Activated naive CD4-positive, alpha-beta T cell treated with anti-CD3 and anti-CD28 coated beads, Interleukin-2, amount 10 ng/mL, durations not matched to agents 7 days and 5 days (primary cell): ENCODE measurements at regions of chr22 and their contacts with region 1.

Region 1: GRCh38 chr22:39395936-39396796 is 3.4 kb upstream of the TAB1 start:
- DNase-seq: no peak
- H3K4me3 Mint-ChIP-seq: no peak overlapping the region
- H3K27ac Mint-ChIP-seq: no peak overlapping the region
- H3K4me1 Mint-ChIP-seq: peaks cover 16% of the 10 kb centered on the region
- H3K27me3 Mint-ChIP-seq: peaks cover 9% of the 10 kb centered on the region

Region 2: GRCh38 chr22:39410264-39410663 is 14.1 kb after region 1 on chr22:
- CTCF ChIA-PET with region 1: interaction called, 16 read pairs
- DNase-seq: no peak
- H3K4me3 Mint-ChIP-seq: no peak overlapping the region
- H3K27ac Mint-ChIP-seq: no peak overlapping the region
- H3K4me1 Mint-ChIP-seq: peaks cover 76% of the 10 kb centered on the region
- H3K27me3 Mint-ChIP-seq: no peaks in the 10 kb centered on the region

Region 3: GRCh38 chr22:39543095-39543494 is 146.9 kb after region 1 on chr22:
- CTCF ChIA-PET with region 1: no interaction called
- DNase-seq: peak; percentile 53
- H3K4me3 Mint-ChIP-seq: no peak overlapping the region
- H3K27ac Mint-ChIP-seq: no peak overlapping the region
- H3K4me1 Mint-ChIP-seq: peaks cover 21% of the 10 kb centered on the region
- H3K27me3 Mint-ChIP-seq: peaks cover 72% of the 10 kb centered on the region